PC-9 (cell line): ENCODE measurements at regions of chr17 and their contacts with region 1.

Region 1: GRCh38 chr17:81101614-81102306 is 63.5 kb upstream of the PVALEF start:
- DNase-seq: peak; percentile 56 to 87
- H3K4me3 ChIP-seq: no peak overlapping the region
- H3K27ac ChIP-seq: no peak overlapping the region
- H3K4me1 ChIP-seq: peaks cover 20% of the 10 kb centered on the region
- H3K27me3 ChIP-seq: no peaks in the 10 kb centered on the region
- CTCF ChIP-seq: peak; percentile 94

Region 2: DNA sequence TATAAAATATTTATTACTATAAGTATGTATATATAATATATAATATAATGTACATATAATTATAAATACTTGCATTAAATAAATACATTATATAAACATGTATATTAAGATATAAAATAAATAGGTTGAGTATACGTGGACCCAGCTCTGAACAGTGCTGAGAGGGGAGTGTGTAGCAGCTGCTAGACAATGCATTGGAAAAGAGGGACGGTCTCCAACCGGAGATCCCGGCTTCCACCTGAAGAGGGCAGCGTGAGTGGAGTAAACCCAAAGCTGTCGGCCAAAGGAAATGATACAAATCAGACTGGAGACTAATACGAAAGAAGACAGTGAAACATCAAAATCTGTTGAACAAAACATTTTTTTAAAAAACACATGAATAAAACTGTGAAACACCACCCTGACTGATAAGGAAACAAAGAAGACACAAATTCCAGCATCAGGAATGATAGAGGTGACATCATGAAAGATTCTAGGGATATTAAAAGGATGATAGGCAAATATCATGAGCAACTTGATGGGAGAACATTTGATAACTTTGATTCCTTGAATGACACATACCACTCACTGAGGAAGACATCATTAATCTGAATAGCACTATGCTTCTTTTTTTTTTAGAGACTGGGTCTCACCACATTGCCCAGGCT is 235.5 kb before region 1 on chr17:
- CTCF ChIA-PET with region 1: no interaction called
- POLR2A ChIA-PET with region 1: no interaction called
- intact Hi-C with region 1: no loop called
- DNase-seq: peak in 1 of 2 experiments; percentile 49
- H3K4me3 ChIP-seq: no peak overlapping the region
- H3K27ac ChIP-seq: no peak overlapping the region
- H3K4me1 ChIP-seq: no peaks in the 10 kb centered on the region
- H3K27me3 ChIP-seq: no peaks in the 10 kb centered on the region
- CTCF ChIP-seq: peak; percentile 49; the same call in 1 of the 2 replicates

Region 3: GRCh38 chr17:80991645-80992076 is 110.1 kb before region 1 on chr17 and contains the start of gene CHMP6:
- CTCF ChIA-PET with region 1: no interaction called
- POLR2A ChIA-PET with region 1: no interaction called
- intact Hi-C with region 1: loop called (anchors 1 kb)
- DNase-seq: peak; percentile 37 to 71
- H3K4me3 ChIP-seq: peak within 1 kb of the TSS; percentile 74
- H3K27ac ChIP-seq: no peak within 1 kb of the TSS
- H3K4me1 ChIP-seq: peaks cover 16% of the 10 kb centered on the region
- H3K27me3 ChIP-seq: no peaks in the 10 kb centered on the region
- CTCF ChIP-seq: peak; percentile 35; the same call in 1 of the 2 replicates
- total RNA-seq, gene CHMP6: 17.4 and 18.1 TPM in 2 replicates

Region 4: GRCh38 chr17:81536299-81537290 is 434.8 kb after region 1 on chr17:
- CTCF ChIA-PET with region 1: interaction called, 13 read pairs
- POLR2A ChIA-PET with region 1: no interaction called
- intact Hi-C with region 1: no loop called
- DNase-seq: no peak
- H3K4me3 ChIP-seq: no peak overlapping the region
- H3K27ac ChIP-seq: no peak overlapping the region
- H3K4me1 ChIP-seq: no peaks in the 10 kb centered on the region
- H3K27me3 ChIP-seq: no peaks in the 10 kb centered on the region
- CTCF ChIP-seq: no peak